ENCODE measurements at regions of chr4 and their contacts with region 1.

Region 1: DNA sequence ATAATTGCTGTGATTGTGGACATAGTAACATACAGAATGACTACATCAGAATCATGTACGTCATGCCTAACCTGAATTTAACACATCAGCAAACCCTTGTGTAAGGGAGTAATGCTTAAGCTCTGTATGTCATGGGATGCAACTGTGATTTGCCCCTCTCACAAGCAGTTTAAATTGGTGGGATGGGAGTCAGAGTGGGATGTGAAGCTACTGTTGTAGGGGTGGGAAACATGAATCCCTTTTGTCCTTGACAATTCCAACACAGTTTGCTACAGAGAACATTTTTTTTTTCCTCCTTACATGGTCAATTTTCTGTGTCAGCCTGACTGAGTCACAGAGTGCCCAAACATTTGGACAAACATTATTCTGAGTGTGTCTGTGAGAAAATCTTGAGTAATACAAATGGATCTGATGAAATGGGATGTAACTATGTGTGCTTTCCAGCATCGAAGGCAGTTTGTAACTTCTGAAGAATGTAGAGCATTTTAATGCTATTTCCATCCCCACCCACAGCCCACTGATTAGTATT is 392.8 kb downstream of the GPM6A start:
- DNase-seq: peak; percentile 5
- H3K4me3 Mint-ChIP-seq: peak overlapping the region; percentile 21
- H3K27ac Mint-ChIP-seq: peak overlapping the region; percentile 99
- H3K4me1 Mint-ChIP-seq: peaks cover 55% of the 10 kb centered on the region
- H3K27me3 Mint-ChIP-seq: no peaks in the 10 kb centered on the region
- CTCF ChIP-seq: no peak

Region 2: GRCh38 chr4:175146799-175147198 is 272.5 kb before region 1 on chr4:
- CTCF ChIA-PET with region 1: no interaction called
- intact Hi-C with region 1: no loop called
- DNase-seq: no peak
- H3K4me3 Mint-ChIP-seq: no peak overlapping the region
- H3K27ac Mint-ChIP-seq: no peak overlapping the region
- H3K4me1 Mint-ChIP-seq: no peaks in the 10 kb centered on the region
- H3K27me3 Mint-ChIP-seq: no peaks in the 10 kb centered on the region
- CTCF ChIP-seq: no peak

Region 3: GRCh38 chr4:175373031-175373430 is 46.3 kb before region 1 on chr4:
- CTCF ChIA-PET with region 1: no interaction called
- intact Hi-C with region 1: loop called (anchors 5 kb)
- DNase-seq: no peak
- H3K4me3 Mint-ChIP-seq: no peak overlapping the region
- H3K27ac Mint-ChIP-seq: no peak overlapping the region
- H3K4me1 Mint-ChIP-seq: no peaks in the 10 kb centered on the region
- H3K27me3 Mint-ChIP-seq: no peaks in the 10 kb centered on the region
- CTCF ChIP-seq: no peak